K562 (cell line): ENCODE measurements at regions of chr4 and their contacts with region 1.

Region 1: GRCh38 chr4:79198951-79199587 is 126.8 kb downstream of the NAA11 start:
- DNase-seq: peak; percentile 57 to 78 (median 67)
- ATAC-seq: peak; percentile 87
- H3K4me3 ChIP-seq: no peak overlapping the region
- H3K27ac ChIP-seq: peak overlapping the region; percentile 48; the same call in 1 of the 3 replicates
- H3K4me1 ChIP-seq: peaks cover 0 to 28% of the 10 kb centered on the region in 2 experiments; a peak in 3 of 5 replicates
- H3K27me3 ChIP-seq: no peaks in the 10 kb centered on the region
- CTCF ChIP-seq: no peak
- EP300 ChIP-seq: peak; percentile 85
- POLR2A ChIP-seq: no peak
- RAD21 ChIP-seq: no peak

Region 2: GRCh38 chr4:78951862-78952472 is 247.1 kb before region 1 on chr4:
- CTCF ChIA-PET with region 1: no interaction called
- POLR2A ChIA-PET with region 1: no interaction called
- in situ Hi-C with region 1: no loop called
- intact Hi-C with region 1: no loop called
- DNase-seq: peak; percentile 56 to 70 (median 58)
- ATAC-seq: peak; percentile 86
- H3K4me3 ChIP-seq: no peak overlapping the region
- H3K27ac ChIP-seq: no peak overlapping the region
- H3K4me1 ChIP-seq: peaks cover 0 to 4% of the 10 kb centered on the region in 2 experiments; a peak in 1 of 5 replicates
- H3K27me3 ChIP-seq: no peaks in the 10 kb centered on the region
- CTCF ChIP-seq: peak; percentile 58 to 84 (median 73)
- EP300 ChIP-seq: no peak
- POLR2A ChIP-seq: no peak
- RAD21 ChIP-seq: peak; percentile 76 to 91

Region 3: DNA sequence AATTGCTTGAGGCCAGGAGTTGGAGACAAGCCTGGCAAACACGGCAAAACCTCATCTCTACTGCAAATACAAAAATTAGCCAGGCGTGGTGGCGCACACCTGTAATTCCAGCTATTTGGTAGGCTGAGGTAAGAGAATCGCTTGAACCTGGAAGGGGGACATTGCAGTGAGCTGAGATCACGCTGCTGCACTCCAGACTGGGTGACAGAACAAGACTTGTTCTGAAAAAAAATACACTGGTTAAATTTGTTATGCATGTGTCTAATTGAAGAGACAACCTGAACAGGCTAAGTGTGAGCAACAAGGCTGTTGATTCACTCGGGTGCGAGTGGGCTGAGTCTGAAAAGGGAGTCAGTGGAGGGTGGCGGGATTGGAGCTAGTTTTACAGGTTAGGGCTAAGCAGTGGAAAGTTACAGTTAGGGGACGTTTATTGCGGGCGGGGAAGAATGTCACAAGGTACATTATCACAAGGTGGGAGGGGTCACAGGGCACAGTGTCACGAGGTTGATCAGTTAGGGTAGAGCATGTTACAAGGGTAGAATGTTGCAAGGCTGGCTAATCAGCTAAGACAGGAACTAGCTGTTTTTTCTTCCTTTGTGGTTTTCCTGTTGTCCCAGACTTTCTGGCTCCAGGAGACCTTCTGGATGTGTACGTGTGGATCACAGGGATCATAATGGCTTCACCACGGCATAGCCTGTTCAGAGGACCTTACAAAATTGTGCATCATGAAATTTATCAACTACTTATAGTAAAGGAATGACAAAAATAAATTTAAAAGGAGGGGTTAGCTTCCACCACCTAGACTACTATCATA is 11.0 kb after region 1 on chr4:
- CTCF ChIA-PET with region 1: no interaction called
- POLR2A ChIA-PET with region 1: interaction called, 13 read pairs
- in situ Hi-C with region 1: no loop called
- intact Hi-C with region 1: no loop called
- DNase-seq: peak; percentile 29 to 97 (median 55)
- ATAC-seq: peak; percentile 76
- H3K4me3 ChIP-seq: peak overlapping the region; percentile 42
- H3K27ac ChIP-seq: peak overlapping the region; percentile 95
- H3K4me1 ChIP-seq: peaks cover 4 to 32% of the 10 kb centered on the region in 2 experiments; a peak in 3 of 5 replicates
- H3K27me3 ChIP-seq: no peaks in the 10 kb centered on the region
- CTCF ChIP-seq: no peak
- EP300 ChIP-seq: peak; percentile 99
- POLR2A ChIP-seq: peak; percentile 80
- RAD21 ChIP-seq: no peak; a peak in 1 of 4 replicates